ENCODE measurements at regions of chr7 and their contacts with region 1.

Region 1: DNA sequence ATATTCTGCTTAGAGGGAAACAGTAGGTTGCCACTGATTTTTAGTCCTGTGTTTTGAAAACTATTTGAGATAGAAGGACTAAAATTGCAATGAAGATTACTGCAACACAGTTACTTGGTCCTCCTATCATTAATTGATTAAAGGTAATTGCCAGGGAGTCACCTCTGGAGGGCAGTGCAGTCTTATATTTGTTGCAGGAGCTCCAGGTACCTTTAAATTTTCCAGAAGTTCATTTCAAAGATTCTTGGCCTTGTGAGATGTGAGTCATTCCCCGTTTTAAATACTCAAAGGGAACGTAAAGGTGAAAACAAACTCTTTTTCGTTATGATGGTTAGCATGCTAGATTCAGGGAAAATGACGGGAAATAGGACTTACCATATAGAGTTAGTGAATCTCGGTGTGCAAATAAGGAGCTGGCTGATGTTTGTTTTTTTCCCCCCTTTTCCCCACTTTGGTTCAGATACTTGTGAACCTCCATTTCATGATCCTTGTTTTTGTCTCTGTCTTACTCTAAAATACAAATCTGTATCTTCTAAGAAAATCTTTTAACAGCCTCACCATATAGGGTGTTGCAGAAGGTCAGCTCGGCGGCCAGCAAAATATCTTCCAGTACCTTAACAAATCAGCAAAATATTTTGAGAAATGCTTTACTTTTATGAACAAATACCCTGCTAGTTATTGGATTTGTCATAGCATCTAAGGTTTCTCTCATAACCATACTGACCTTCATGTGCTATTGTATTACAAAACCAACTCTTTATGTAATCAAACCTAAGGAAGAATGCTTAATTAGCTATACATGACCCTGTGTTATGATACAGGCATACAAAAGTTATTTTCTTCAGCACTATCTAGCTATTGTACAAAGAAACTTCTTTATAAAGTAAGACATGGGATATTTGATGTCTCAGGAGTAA is 143.0 kb upstream of the HDAC9 start:
- DNase-seq: peak in 1 of 3 donors; percentile 15
- ATAC-seq: peak; percentile 43 to 65
- H3K4me3 ChIP-seq: no peak overlapping the region
- H3K27ac ChIP-seq: no peak overlapping the region
- H3K4me1 ChIP-seq: no peaks in the 10 kb centered on the region
- H3K27me3 ChIP-seq: no peaks in the 10 kb centered on the region

Region 2: GRCh38 chr7:18494821-18495408 is 142.3 kb after region 1 on chr7:
- intact Hi-C with region 1: loop called in 1 of 4 experiments (anchors 5 kb)
- DNase-seq: no peak
- ATAC-seq: peak; percentile 62 to 67
- H3K4me3 ChIP-seq: peak overlapping the region; percentile 80
- H3K27ac ChIP-seq: no peak overlapping the region
- H3K4me1 ChIP-seq: peaks cover 3% of the 10 kb centered on the region
- H3K27me3 ChIP-seq: no peaks in the 10 kb centered on the region

Region 3: GRCh38 chr7:18570890-18571478 is 218.4 kb after region 1 on chr7:
- intact Hi-C with region 1: loop called in 1 of 4 experiments (anchors 5 kb)
- DNase-seq: no peak
- ATAC-seq: peak in 1 of 2 donors; percentile 45
- H3K4me3 ChIP-seq: no peak overlapping the region
- H3K27ac ChIP-seq: no peak overlapping the region
- H3K4me1 ChIP-seq: no peaks in the 10 kb centered on the region
- H3K27me3 ChIP-seq: no peaks in the 10 kb centered on the region

Region 4: DNA sequence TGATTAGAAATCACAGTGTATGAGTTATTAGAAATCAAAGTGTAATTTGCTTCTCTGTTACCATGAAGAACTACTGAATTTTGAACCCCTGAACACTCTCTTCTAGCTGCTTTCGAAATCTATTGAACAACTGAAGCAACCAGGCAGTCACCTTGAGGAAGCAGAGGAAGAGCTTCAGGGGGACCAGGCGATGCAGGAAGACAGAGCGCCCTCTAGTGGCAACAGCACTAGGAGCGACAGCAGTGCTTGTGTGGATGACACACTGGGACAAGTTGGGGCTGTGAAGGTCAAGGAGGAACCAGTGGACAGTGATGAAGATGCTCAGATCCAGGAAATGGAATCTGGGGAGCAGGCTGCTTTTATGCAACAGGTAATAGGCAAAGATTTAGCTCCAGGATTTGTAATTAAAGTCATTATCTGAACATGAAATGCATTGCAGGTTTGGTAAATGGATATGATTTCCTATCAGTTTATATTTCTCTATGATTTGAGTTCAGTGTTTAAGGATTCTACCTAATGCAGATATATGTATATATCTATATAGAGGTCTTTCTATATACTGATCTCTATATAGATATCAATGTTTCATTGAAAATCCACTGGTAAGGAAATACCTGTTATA is 313.6 kb after region 1 on chr7:
- intact Hi-C with region 1: loop called in 2 of 4 experiments (anchors 10 kb)
- DNase-seq: peak; percentile 78 to 88 (median 85)
- ATAC-seq: peak; percentile 87 to 91
- H3K4me3 ChIP-seq: no peak overlapping the region
- H3K27ac ChIP-seq: no peak overlapping the region
- H3K4me1 ChIP-seq: no peaks in the 10 kb centered on the region
- H3K27me3 ChIP-seq: no peaks in the 10 kb centered on the region

Measured in right cardiac atrium (tissue), 5 donors.